Calu3 (cell line): ENCODE measurements at regions of chr3 and their contacts with region 1.

Region 1: DNA sequence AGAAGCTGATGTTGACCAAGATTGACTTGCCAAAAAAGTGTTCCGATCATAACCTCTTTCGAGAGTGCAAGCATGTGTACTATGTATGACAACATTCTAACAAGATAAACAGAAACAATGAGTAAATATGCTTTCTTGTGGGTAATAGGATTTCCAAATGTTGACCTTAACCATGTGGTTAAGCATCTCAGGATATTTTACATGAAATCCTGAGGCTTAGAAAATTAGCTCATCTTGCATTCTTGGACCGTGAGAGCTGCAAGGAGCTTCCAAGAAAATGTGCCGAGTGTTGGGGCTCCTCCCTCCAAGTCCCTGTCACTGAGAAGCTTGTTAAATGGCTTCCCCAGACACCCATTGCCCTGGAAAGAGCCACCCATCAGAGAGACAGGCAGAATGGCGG is 50.1 kb downstream of the C3orf20 start:
- DNase-seq: no peak
- H3K4me3 Mint-ChIP-seq: no peak overlapping the region
- H3K27ac Mint-ChIP-seq: no peak overlapping the region
- H3K4me1 Mint-ChIP-seq: no peaks in the 10 kb centered on the region
- H3K27me3 Mint-ChIP-seq: peaks cover 8% of the 10 kb centered on the region
- CTCF ChIP-seq: no peak

Region 2: GRCh38 chr3:14577897-14578296 is 147.1 kb before region 1 on chr3:
- CTCF ChIA-PET with region 1: no interaction called
- intact Hi-C with region 1: no loop called
- DNase-seq: no peak
- H3K4me3 Mint-ChIP-seq: no peak overlapping the region
- H3K27ac Mint-ChIP-seq: no peak overlapping the region
- H3K4me1 Mint-ChIP-seq: no peaks in the 10 kb centered on the region
- H3K27me3 Mint-ChIP-seq: peaks cover 93% of the 10 kb centered on the region
- CTCF ChIP-seq: no peak

Region 3: GRCh38 chr3:14626881-14627411 is 98.1 kb before region 1 on chr3:
- CTCF ChIA-PET with region 1: no interaction called
- intact Hi-C with region 1: no loop called
- DNase-seq: no peak
- H3K4me3 Mint-ChIP-seq: no peak overlapping the region
- H3K27ac Mint-ChIP-seq: no peak overlapping the region
- H3K4me1 Mint-ChIP-seq: no peaks in the 10 kb centered on the region
- H3K27me3 Mint-ChIP-seq: peaks cover 66% of the 10 kb centered on the region
- CTCF ChIP-seq: no peak

Region 4: GRCh38 chr3:14857506-14857905 is 132.5 kb after region 1 on chr3:
- CTCF ChIA-PET with region 1: interaction called, 11 read pairs
- intact Hi-C with region 1: no loop called
- DNase-seq: no peak
- H3K4me3 Mint-ChIP-seq: no peak overlapping the region
- H3K27ac Mint-ChIP-seq: no peak overlapping the region
- H3K4me1 Mint-ChIP-seq: no peaks in the 10 kb centered on the region
- H3K27me3 Mint-ChIP-seq: peaks cover 79% of the 10 kb centered on the region
- CTCF ChIP-seq: no peak

Region 5: DNA sequence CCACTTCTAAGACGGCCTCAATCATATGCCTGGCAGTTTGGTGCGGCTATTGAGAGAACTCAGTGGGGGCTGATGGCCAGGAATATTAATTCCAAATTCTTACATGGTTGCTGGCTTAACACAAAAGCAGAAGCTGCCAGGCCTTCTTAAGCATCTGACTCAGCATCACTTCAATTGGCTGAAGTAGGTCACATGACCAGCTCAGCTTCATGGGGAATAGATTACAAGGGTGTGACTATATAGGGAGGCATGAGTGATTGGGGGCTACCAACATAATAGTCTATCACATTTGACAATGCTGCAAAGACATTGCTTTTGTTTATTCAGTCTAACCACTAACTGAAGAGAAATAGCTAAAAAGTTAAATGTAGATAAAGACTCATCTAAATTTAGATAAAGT is 1174.4 kb after region 1 on chr3:
- CTCF ChIA-PET with region 1: no interaction called
- intact Hi-C with region 1: no loop called
- DNase-seq: no peak
- H3K4me3 Mint-ChIP-seq: no peak overlapping the region
- H3K27ac Mint-ChIP-seq: no peak overlapping the region
- H3K4me1 Mint-ChIP-seq: no peaks in the 10 kb centered on the region
- H3K27me3 Mint-ChIP-seq: no peaks in the 10 kb centered on the region
- CTCF ChIP-seq: no peak